Calu3 (cell line): ENCODE measurements at regions of chr2 and their contacts with region 1.

Region 1: DNA sequence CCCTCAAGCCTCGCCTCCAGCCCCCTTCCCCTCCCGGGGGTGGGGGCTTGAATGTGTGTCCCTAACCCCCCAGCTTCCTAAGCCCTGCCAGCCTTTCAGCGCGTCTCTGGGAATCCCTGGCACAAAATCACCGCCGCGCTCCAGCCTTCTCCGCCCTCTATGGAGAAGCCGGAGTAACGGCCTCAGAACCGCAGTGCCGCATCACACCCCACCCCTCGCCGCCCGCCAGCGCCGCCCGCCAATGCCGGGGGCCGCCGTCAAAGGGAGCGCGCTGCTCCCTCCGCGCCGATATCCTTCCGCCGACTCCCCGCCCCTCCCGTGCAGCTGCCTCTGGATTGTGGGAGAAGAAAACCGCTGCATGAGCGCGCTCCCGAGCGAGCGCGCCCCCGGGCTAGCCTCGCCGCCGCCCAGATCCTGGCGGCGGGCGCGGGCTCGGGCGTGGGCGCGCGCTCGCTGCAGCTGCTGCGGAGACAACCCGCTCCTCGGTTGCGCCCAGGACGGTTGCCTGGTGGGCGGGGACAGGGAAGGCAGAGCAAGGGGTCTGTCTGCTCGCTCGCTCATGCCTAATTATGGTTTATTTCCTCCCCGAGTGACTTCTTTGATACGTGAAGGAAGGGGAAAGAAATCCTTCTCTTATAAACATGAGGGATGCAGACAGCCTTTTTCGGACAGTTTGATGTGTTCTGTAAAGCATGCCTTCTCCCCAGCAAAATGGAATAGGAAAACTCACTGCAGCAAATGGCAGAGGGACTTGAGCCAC is at the start of gene CCDC88A:
- DNase-seq: peak; percentile 98
- H3K4me3 Mint-ChIP-seq: peak within 1 kb of the TSS; percentile 96
- H3K27ac Mint-ChIP-seq: peak within 1 kb of the TSS; percentile 91
- H3K4me1 Mint-ChIP-seq: peaks cover 38% of the 10 kb centered on the region
- H3K27me3 Mint-ChIP-seq: no peaks in the 10 kb centered on the region
- CTCF ChIP-seq: no peak
- total RNA-seq, gene CCDC88A: 45.5 and 49.7 TPM in 2 replicates

Region 2: DNA sequence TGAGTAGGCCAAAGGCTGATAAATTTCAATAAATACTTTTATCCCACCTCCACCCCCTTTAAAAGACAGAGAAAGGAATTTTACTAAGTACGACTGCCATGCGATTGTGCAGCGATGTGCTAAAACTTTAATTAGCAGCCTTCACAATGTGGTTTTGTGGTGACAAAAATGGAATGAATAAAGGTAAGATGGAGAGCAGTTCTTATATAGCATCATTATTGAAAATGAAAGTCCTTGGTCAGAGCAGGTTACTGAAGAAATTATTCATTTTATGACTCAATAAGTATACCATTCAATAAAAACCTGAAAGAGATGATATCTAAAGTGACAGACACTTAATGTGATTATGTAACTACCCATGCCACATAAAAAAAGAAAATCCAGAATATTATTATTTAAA is 117.6 kb before region 1 on chr2:
- CTCF ChIA-PET with region 1: no interaction called
- intact Hi-C with region 1: loop called (anchors 5 kb)
- DNase-seq: no peak
- H3K4me3 Mint-ChIP-seq: no peak overlapping the region
- H3K27ac Mint-ChIP-seq: no peak overlapping the region
- H3K4me1 Mint-ChIP-seq: no peaks in the 10 kb centered on the region
- H3K27me3 Mint-ChIP-seq: no peaks in the 10 kb centered on the region
- CTCF ChIP-seq: no peak

Region 3: DNA sequence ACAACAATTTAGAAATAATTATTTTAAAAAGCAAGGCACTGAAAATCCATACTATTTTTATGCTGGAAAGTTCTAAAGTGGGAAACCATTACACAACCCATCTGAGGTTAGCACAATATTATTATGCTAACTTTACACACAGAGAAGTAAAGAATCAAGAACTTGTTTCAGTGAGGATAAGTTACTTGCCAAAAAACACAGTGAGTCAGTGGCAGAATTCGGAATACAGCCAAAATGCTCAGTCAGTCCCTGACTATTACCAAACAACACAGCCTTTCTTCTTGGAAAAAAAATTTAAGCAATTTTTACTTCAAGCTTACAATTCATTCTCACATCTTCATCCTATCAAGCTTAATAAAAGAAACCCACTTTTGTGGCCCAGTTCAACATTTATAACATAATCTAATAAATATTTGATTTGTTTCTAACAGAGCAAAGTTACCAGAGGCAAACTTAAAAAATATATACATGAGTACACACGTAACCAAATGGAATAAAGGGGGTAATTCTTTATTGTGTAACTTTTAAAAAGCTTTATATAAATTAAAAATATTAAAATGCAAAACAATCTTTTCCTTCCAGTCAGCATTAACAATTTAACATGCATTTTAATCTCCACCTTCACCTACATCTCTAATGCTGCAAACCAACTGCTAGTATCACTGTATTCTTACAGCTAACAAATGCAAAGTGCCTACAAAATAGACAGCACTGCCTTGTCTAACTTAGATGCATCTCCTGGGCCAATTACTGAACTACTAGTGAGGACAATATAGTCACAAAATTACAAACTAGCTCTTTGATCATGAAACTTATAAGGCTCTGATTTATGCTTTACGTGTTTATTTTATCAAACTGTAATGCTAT is 55.4 kb before region 1 on chr2:
- CTCF ChIA-PET with region 1: no interaction called
- intact Hi-C with region 1: loop called (anchors 5 kb)
- DNase-seq: peak; percentile 58
- H3K4me3 Mint-ChIP-seq: no peak overlapping the region
- H3K27ac Mint-ChIP-seq: no peak overlapping the region
- H3K4me1 Mint-ChIP-seq: peaks cover 17% of the 10 kb centered on the region
- H3K27me3 Mint-ChIP-seq: no peaks in the 10 kb centered on the region
- CTCF ChIP-seq: no peak

Region 4: GRCh38 chr2:55519938-55520885 is 100.4 kb after region 1 on chr2:
- CTCF ChIA-PET with region 1: no interaction called
- intact Hi-C with region 1: no loop called
- DNase-seq: peak; percentile 23
- H3K4me3 Mint-ChIP-seq: peak overlapping the region; percentile 94
- H3K27ac Mint-ChIP-seq: peak overlapping the region; percentile 94
- H3K4me1 Mint-ChIP-seq: peaks cover 9% of the 10 kb centered on the region
- H3K27me3 Mint-ChIP-seq: no peaks in the 10 kb centered on the region
- CTCF ChIP-seq: no peak